MCF 10A (cell line): ENCODE measurements at regions of chr17 and their contacts with region 1.

Region 1: GRCh38 chr17:9389110-9389509 is 186.5 kb downstream of the STX8 start:
- DNase-seq: peak; percentile 80
- H3K4me3 Mint-ChIP-seq: no peak overlapping the region
- H3K27ac Mint-ChIP-seq: peak overlapping the region; percentile 89
- H3K4me1 Mint-ChIP-seq: peaks cover 22% of the 10 kb centered on the region
- H3K27me3 Mint-ChIP-seq: no peaks in the 10 kb centered on the region
- CTCF ChIP-seq: no peak

Region 2: GRCh38 chr17:9371019-9371418 is 18.1 kb before region 1 on chr17:
- CTCF ChIA-PET with region 1: interaction called, 4 read pairs
- POLR2A ChIA-PET with region 1: no interaction called
- intact Hi-C with region 1: loop called (anchors 1 kb)
- DNase-seq: peak; percentile 39
- H3K4me3 Mint-ChIP-seq: no peak overlapping the region
- H3K27ac Mint-ChIP-seq: no peak overlapping the region
- H3K4me1 Mint-ChIP-seq: peaks cover 17% of the 10 kb centered on the region
- H3K27me3 Mint-ChIP-seq: no peaks in the 10 kb centered on the region
- CTCF ChIP-seq: no peak